ENCODE measurements at regions of chr17 and their contacts with region 1.

Region 1: GRCh38 chr17:45060797-45061605 is at the start of gene NMT1:
- DNase-seq: peak; percentile 99
- ATAC-seq: peak; percentile 95
- H3K4me3 ChIP-seq: peak within 1 kb of the TSS; percentile 66
- H3K27ac ChIP-seq: peak within 1 kb of the TSS; percentile 85
- H3K4me1 ChIP-seq: peaks cover 6% of the 10 kb centered on the region; the same call in 1 of the 2 replicates
- H3K27me3 ChIP-seq: no peaks in the 10 kb centered on the region
- CTCF ChIP-seq: no peak
- POLR2A ChIP-seq: peak; percentile 96
- RAD21 ChIP-seq: no peak
- total RNA-seq, gene NMT1: 57.5 and 60.6 TPM in 2 replicates

Region 2: GRCh38 chr17:45092932-45093430 is 32.0 kb after region 1 on chr17:
- CTCF ChIA-PET with region 1: interaction called, 5 read pairs
- POLR2A ChIA-PET with region 1: no interaction called
- dilution Hi-C with region 1: no loop called
- in situ Hi-C with region 1: no loop called
- intact Hi-C with region 1: loop called (anchors 2 kb)
- DNase-seq: peak; percentile 99
- ATAC-seq: peak; percentile 97
- H3K4me3 ChIP-seq: no peak overlapping the region
- H3K27ac ChIP-seq: peak overlapping the region; percentile 99
- H3K4me1 ChIP-seq: peaks cover 28% of the 10 kb centered on the region
- H3K27me3 ChIP-seq: no peaks in the 10 kb centered on the region
- CTCF ChIP-seq: no peak
- POLR2A ChIP-seq: peak; percentile 67; the same call in 1 of the 2 replicates
- RAD21 ChIP-seq: no peak

Region 3: GRCh38 chr17:45143767-45144198 is 82.8 kb after region 1 on chr17:
- CTCF ChIA-PET with region 1: no interaction called
- POLR2A ChIA-PET with region 1: no interaction called
- dilution Hi-C with region 1: no loop called
- in situ Hi-C with region 1: no loop called
- intact Hi-C with region 1: no loop called
- DNase-seq: peak; percentile 80
- ATAC-seq: peak; percentile 49
- H3K4me3 ChIP-seq: peak overlapping the region; percentile 22
- H3K27ac ChIP-seq: peak overlapping the region; percentile 98
- H3K4me1 ChIP-seq: peaks cover 14% of the 10 kb centered on the region
- H3K27me3 ChIP-seq: no peaks in the 10 kb centered on the region
- CTCF ChIP-seq: no peak
- POLR2A ChIP-seq: no peak
- RAD21 ChIP-seq: no peak

Region 4: GRCh38 chr17:45428050-45428617 is 367.1 kb after region 1 on chr17:
- CTCF ChIA-PET with region 1: no interaction called
- POLR2A ChIA-PET with region 1: no interaction called
- dilution Hi-C with region 1: no loop called
- in situ Hi-C with region 1: no loop called
- intact Hi-C with region 1: no loop called
- DNase-seq: peak; percentile 42
- ATAC-seq: peak; percentile 78
- H3K4me3 ChIP-seq: no peak overlapping the region
- H3K27ac ChIP-seq: no peak overlapping the region
- H3K4me1 ChIP-seq: peaks cover 6% of the 10 kb centered on the region; the same call in 1 of the 2 replicates
- H3K27me3 ChIP-seq: peaks cover 52% of the 10 kb centered on the region
- CTCF ChIP-seq: peak; percentile 86
- POLR2A ChIP-seq: no peak
- RAD21 ChIP-seq: peak; percentile 75

Measured in IMR-90 (cell line).